ENCODE measurements at regions of chr1 and their contacts with region 1.

Region 1: GRCh38 chr1:6554031-6554906 is at the start of gene NOL9:
- DNase-seq: peak; percentile 91 to 94
- H3K4me3 ChIP-seq: peak within 1 kb of the TSS; percentile 96
- H3K4me3 Mint-ChIP-seq: peak within 1 kb of the TSS; percentile 72
- H3K27ac Mint-ChIP-seq: no peak within 1 kb of the TSS
- H3K4me1 ChIP-seq: peaks cover 5% of the 10 kb centered on the region; the same call in 1 of the 2 replicates
- H3K4me1 Mint-ChIP-seq: peaks cover 5% of the 10 kb centered on the region
- H3K27me3 ChIP-seq: no peaks in the 10 kb centered on the region
- H3K27me3 Mint-ChIP-seq: no peaks in the 10 kb centered on the region
- CTCF ChIP-seq: peak; percentile 86 to 89
- total RNA-seq, gene NOL9: 33.6 and 37.3 TPM in 2 replicates

Region 2: DNA sequence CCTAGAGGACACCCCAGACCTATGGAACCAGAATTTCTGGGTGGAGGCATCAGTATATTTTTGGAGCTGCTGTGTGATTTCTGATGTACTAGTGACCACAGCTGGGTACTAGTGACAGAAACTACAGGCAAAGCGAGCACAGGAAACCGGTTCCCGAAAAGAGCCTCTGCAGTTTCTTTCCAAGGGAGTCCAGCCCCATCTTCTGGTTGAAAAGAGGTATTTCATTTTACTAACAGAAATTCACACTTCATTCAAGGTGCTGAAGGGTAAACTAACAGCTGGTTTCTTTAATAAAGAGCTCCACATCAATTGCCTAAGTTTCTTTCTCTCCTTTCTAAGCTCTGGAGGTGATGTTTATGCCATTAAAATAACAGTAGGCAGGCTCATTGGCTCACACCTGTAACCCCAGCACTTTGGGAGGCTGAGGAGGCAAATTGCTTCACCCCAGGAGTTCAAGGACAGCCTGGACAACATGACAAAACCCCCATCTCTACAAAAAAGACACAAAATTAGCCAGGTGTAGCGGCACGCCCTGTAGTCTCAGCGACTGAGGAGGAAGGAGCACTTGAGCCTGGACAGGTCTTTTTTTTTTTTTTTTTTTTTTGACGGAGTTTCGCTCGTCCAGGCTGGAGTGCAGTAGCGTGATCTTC is 92.4 kb after region 1 on chr1:
- CTCF ChIA-PET with region 1: no interaction called
- POLR2A ChIA-PET with region 1: no interaction called
- intact Hi-C with region 1: loop called (anchors 1 kb)
- DNase-seq: peak in 1 of 2 experiments; percentile 16
- H3K4me3 ChIP-seq: no peak overlapping the region
- H3K4me3 Mint-ChIP-seq: no peak overlapping the region
- H3K27ac Mint-ChIP-seq: no peak overlapping the region
- H3K4me1 ChIP-seq: no peaks in the 10 kb centered on the region
- H3K4me1 Mint-ChIP-seq: no peaks in the 10 kb centered on the region
- H3K27me3 ChIP-seq: no peaks in the 10 kb centered on the region
- H3K27me3 Mint-ChIP-seq: no peaks in the 10 kb centered on the region
- CTCF ChIP-seq: peak; percentile 37 to 43